PC-3 (cell line): ENCODE measurements at regions of chr18 and their contacts with region 1.

Region 1: GRCh38 chr18:77067291-77068061 is 65.1 kb downstream of the MBP start:
- DNase-seq: peak; percentile 86
- ATAC-seq: peak; percentile 72
- H3K4me3 ChIP-seq: peak overlapping the region; percentile 9; the same call in 1 of the 2 replicates
- H3K27ac ChIP-seq: peak overlapping the region; percentile 99
- H3K4me1 ChIP-seq: peaks cover 94% of the 10 kb centered on the region
- H3K27me3 ChIP-seq: no peaks in the 10 kb centered on the region
- CTCF ChIP-seq: peak; percentile 37; the same call in 1 of the 2 replicates

Region 2: GRCh38 chr18:77054606-77055428 is 12.7 kb before region 1 on chr18:
- CTCF ChIA-PET with region 1: interaction called, 3 read pairs
- POLR2A ChIA-PET with region 1: no interaction called
- intact Hi-C with region 1: loop called (anchors 2 kb)
- DNase-seq: peak; percentile 93
- ATAC-seq: peak; percentile 92
- H3K4me3 ChIP-seq: peak overlapping the region; percentile 54
- H3K27ac ChIP-seq: peak overlapping the region; percentile 98
- H3K4me1 ChIP-seq: peaks cover 32% of the 10 kb centered on the region
- H3K27me3 ChIP-seq: no peaks in the 10 kb centered on the region
- CTCF ChIP-seq: peak; percentile 85

Region 3: DNA sequence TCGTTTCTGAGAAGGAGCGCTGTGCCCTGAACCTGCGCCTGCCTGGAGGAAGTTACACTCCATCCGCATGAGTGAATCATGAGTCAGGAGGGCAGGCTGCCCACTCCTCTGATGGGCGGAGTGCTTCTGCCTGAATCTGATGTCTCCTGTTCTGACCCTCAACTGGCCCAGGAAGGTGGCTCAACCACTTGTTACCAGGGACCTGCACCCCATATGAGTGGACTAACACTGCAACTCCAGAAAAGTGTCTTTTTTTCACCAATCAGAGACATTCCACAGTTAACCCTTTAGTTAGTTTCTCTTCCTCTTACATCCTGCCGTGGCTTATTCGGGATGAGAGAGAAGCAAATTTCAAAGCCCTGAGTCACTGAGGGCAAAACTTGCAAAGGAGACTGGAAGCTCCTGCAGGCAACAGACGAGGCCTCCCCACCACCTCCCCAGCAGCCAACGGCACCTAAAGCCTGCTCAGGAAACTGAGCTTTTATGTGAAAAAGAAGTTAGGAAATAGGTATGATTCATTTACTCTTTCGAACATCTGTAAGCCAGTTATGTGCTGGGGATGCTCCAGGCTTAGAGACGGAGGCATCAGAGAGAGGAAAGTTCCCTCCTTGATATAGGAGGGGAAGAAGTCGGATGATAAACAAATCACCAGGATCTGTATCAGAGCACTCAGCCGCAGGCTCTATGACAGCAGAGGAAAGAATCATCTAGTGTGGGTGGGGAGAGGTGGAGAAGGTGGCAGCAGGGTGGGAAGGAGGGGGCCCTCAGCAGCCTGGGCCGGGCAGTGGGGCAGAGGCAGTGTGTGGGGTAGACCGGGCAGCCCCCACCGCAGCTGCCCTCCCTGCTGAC is 34.2 kb after region 1 on chr18:
- CTCF ChIA-PET with region 1: interaction called, 3 read pairs
- POLR2A ChIA-PET with region 1: no interaction called
- intact Hi-C with region 1: loop called (anchors 1 kb)
- DNase-seq: peak; percentile 95
- ATAC-seq: peak; percentile 83
- H3K4me3 ChIP-seq: peak overlapping the region; percentile 46; the same call in 1 of the 2 replicates
- H3K27ac ChIP-seq: peak overlapping the region; percentile 99
- H3K4me1 ChIP-seq: peaks cover 46% of the 10 kb centered on the region
- H3K27me3 ChIP-seq: no peaks in the 10 kb centered on the region
- CTCF ChIP-seq: no peak

Region 4: DNA sequence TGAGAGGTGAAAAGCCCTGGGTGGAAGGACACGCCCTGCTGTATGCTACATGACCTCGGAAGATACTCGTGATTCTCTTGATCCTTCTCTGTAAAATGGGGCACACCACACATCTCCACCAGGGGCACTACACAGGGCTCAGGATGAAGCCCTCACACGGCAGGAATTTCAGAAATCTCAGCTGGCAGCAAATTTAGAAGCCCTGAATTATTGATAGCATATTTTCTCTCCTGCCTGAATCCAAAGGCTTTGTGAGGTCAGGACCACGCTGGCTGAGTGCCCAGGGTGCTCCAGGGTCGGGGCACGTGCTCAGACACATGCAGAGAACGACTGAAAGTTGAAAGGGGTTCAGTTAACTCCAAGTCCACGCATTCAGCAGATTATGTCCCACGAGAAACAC is 140.1 kb after region 1 on chr18:
- CTCF ChIA-PET with region 1: interaction called, 12 read pairs
- POLR2A ChIA-PET with region 1: no interaction called
- intact Hi-C with region 1: loop called (anchors 5 kb)
- DNase-seq: peak; percentile 47
- ATAC-seq: no peak
- H3K4me3 ChIP-seq: no peak overlapping the region
- H3K27ac ChIP-seq: no peak overlapping the region
- H3K4me1 ChIP-seq: peaks cover 19% of the 10 kb centered on the region
- H3K27me3 ChIP-seq: no peaks in the 10 kb centered on the region
- CTCF ChIP-seq: peak; percentile 64